Activated naive CD4-positive, alpha-beta T cell treated with anti-CD3 and anti-CD28 coated beads for 36 hours (primary cell): ENCODE measurements at regions of chr1 and their contacts with region 1.

Region 1: GRCh38 chr1:19715334-19716203 is 50.9 kb downstream of the HTR6 start:
- DNase-seq: peak; percentile 94
- H3K4me3 Mint-ChIP-seq: no peak overlapping the region
- H3K27ac Mint-ChIP-seq: no peak overlapping the region
- H3K4me1 Mint-ChIP-seq: peaks cover 30% of the 10 kb centered on the region
- H3K27me3 Mint-ChIP-seq: no peaks in the 10 kb centered on the region

Region 2: DNA sequence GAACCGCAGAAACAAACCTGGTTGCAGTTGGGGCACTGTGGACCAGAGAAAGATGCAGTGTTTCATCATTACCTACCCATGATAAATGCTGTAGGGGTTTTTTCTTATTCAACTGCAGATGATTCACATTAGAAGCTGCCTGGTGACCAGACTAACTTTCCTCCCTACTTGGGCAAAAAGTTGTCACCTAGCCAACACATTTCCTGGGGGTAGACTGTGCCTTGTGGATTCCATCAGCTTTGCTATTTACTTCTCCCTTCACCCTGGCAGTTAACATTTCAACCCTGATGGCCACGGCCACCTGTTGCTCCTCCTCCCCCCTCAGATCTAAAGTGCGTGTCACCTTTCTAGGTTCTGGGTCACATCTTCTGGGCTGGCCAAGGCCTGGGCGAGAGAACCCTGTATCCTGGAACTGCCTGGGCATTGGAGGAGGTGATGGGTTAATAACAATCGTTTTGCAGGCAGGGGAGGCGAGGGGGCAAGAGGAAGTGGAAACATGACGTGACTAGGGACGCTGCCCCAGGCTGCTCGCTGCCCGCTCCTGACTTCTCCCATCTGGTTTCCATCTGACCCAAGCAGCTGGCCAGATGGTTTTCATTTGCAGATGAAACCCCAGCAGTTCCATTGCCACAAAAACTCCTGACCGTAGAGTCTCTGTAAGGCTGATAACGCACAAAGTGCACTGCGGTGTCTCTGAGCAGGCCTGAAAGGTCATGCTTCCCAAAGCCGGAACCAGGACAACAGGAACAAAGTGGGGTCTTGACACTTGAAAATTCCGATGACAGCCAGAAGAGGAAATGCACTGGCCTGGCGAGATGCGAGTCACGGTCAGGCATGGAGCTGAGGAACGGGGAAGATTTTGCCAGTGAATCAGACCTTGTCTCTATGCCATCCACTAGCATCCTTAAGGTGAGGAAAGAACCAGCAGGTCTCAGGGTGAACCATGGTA is 266.8 kb before region 1 on chr1:
- CTCF ChIA-PET with region 1: no interaction called
- intact Hi-C with region 1: loop called (anchors 2 kb)
- DNase-seq: peak; percentile 74
- H3K4me3 Mint-ChIP-seq: peak overlapping the region; percentile 17
- H3K27ac Mint-ChIP-seq: peak overlapping the region; percentile 90
- H3K4me1 Mint-ChIP-seq: peaks cover 91% of the 10 kb centered on the region
- H3K27me3 Mint-ChIP-seq: no peaks in the 10 kb centered on the region

Region 3: DNA sequence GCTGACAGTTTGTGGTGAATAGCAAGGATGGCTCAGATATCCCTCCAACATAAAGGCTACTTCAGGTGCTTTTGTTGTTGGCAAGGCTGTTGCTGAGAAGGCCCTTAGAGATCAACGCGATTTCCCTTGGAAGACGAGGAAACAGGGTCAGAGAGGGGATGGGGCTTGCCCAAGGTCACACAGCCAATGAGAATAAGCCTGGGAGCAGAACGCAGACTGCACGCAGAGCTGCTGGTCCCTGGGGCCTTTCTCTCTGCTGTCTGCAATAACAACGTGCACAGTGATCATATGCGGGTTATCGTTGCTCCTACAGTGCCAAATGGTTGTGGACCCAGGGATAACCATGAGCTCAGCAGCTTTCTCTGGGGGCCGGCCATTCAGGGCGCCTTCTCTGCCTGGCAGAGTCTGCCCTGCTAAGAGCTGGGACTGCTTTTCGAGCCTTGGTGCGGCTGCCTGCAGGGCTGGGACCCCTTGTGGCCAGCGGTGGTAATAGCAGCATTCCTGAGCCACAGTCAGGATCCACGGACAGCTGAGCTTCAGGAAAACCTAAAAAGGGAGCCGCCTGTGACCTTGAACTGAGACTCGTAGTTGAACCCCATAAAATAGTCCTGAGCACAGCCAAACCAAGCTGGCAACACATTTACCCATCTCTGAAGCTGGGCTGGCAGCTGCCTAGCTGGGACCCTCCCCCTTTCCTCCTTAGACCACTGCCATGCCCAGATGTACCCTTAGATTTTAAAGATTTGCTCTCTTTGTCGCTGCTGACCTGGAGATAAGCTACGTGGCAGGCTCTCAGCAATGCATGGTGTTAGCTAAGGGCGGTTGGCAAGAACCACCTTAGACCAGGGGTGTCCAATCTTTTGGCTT is 11.1 kb before region 1 on chr1:
- CTCF ChIA-PET with region 1: interaction called, 15 read pairs
- intact Hi-C with region 1: no loop called
- DNase-seq: peak; percentile 68
- H3K4me3 Mint-ChIP-seq: no peak overlapping the region
- H3K27ac Mint-ChIP-seq: no peak overlapping the region
- H3K4me1 Mint-ChIP-seq: peaks cover 14% of the 10 kb centered on the region
- H3K27me3 Mint-ChIP-seq: no peaks in the 10 kb centered on the region

Region 4: GRCh38 chr1:19799877-19800804 is 84.6 kb after region 1 on chr1 and contains the start of gene TMCO4:
- CTCF ChIA-PET with region 1: no interaction called
- intact Hi-C with region 1: loop called (anchors 2 kb)
- DNase-seq: peak; percentile 67
- H3K4me3 Mint-ChIP-seq: peak within 1 kb of the TSS; percentile 78
- H3K27ac Mint-ChIP-seq: peak within 1 kb of the TSS; percentile 90
- H3K4me1 Mint-ChIP-seq: peaks cover 16% of the 10 kb centered on the region
- H3K27me3 Mint-ChIP-seq: no peaks in the 10 kb centered on the region
- total RNA-seq, gene TMCO4: 11.9 to 15.4 TPM

Region 5: GRCh38 chr1:20185834-20186782 is 470.5 kb after region 1 on chr1 and contains the starts of genes PLA2G2C and UBXN10:
- CTCF ChIA-PET with region 1: no interaction called
- intact Hi-C with region 1: loop called (anchors 2 kb)
- DNase-seq: peak; percentile 94
- H3K4me3 Mint-ChIP-seq: peak within 1 kb of the TSS; percentile 62
- H3K27ac Mint-ChIP-seq: peak within 1 kb of the TSS; percentile 82
- H3K4me1 Mint-ChIP-seq: peaks cover 41% of the 10 kb centered on the region
- H3K27me3 Mint-ChIP-seq: no peaks in the 10 kb centered on the region
- total RNA-seq, gene PLA2G2C: 0.94 to 0.95 TPM
- total RNA-seq, gene UBXN10: 0.27 to 0.33 TPM

Region 6: DNA sequence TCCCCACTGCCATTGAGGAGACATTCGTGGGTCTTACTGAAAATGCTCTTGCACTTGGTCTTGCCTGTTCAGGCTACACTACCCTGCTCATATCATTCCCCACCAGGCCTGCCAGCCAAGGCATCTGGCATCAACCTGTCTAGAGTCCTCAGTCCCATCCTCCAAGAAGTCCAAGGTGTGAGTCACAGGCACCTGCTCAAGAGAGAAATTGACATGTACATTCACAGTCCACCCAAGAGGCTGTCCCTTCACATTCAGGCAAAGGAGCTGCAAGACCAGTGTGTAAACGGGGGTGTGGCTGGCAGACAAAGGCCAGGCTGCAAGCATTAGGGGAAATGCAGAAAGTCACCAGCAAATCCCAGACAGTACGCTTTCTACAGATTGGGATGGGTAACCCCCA is 483.8 kb after region 1 on chr1:
- CTCF ChIA-PET with region 1: no interaction called
- intact Hi-C with region 1: no loop called
- DNase-seq: no peak
- H3K4me3 Mint-ChIP-seq: no peak overlapping the region
- H3K27ac Mint-ChIP-seq: no peak overlapping the region
- H3K4me1 Mint-ChIP-seq: no peaks in the 10 kb centered on the region
- H3K27me3 Mint-ChIP-seq: peaks cover 2% of the 10 kb centered on the region